Activated naive CD4-positive, alpha-beta T cell treated with anti-CD3 and anti-CD28 coated beads for 36 hours (primary cell): ENCODE measurements at regions of chr7 and their contacts with region 1.

Region 1: DNA sequence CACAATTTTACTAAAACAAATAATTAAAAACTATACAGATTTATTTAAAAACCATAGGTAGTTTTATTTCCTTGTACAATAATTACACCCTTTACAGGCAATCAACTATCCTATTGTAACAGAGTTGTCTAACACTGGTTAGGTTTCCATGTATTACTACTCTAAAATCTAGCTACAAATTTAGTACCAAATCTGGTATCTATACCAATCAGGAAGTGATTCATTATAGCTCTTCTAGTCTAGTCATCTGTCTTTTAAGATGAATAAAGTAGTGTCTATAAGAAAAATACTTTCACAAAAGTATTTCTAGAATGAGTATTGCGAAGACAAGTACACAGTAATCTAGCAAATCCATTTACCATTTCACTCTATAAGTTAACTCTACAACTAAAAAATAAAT is 16.9 kb downstream of the ZNF800 start:
- DNase-seq: no peak
- H3K4me3 Mint-ChIP-seq: no peak overlapping the region
- H3K27ac Mint-ChIP-seq: no peak overlapping the region
- H3K4me1 Mint-ChIP-seq: peaks cover 53% of the 10 kb centered on the region
- H3K27me3 Mint-ChIP-seq: no peaks in the 10 kb centered on the region

Region 2: DNA sequence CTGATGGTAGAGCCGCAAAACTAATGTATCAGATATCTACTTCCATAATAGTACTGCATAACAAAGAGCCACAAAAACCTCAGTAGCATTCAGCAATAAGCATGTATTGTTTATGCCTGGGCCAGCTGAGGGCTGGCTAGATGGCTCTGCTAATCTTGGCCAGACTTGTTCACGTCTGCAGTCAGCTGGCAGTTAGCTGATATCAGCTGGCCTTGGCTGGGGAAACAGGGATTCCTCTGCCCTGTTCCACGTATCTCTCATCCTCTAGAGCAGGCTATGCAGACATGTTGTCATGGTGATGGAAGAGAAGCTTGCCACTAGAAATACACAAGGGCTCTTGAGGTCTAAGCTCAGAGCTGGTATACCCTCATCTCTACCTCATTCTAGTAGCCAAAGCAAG is 185.7 kb before region 1 on chr7:
- CTCF ChIA-PET with region 1: no interaction called
- intact Hi-C with region 1: no loop called
- DNase-seq: no peak
- H3K4me3 Mint-ChIP-seq: no peak overlapping the region
- H3K27ac Mint-ChIP-seq: no peak overlapping the region
- H3K4me1 Mint-ChIP-seq: peaks cover 8% of the 10 kb centered on the region
- H3K27me3 Mint-ChIP-seq: peaks cover 30% of the 10 kb centered on the region

Region 3: GRCh38 chr7:127745445-127745844 is 369.8 kb after region 1 on chr7:
- CTCF ChIA-PET with region 1: no interaction called
- intact Hi-C with region 1: loop called (anchors 10 kb)
- DNase-seq: peak; percentile 27
- H3K4me3 Mint-ChIP-seq: no peak overlapping the region
- H3K27ac Mint-ChIP-seq: peak overlapping the region; percentile 19
- H3K4me1 Mint-ChIP-seq: peaks cover 51% of the 10 kb centered on the region
- H3K27me3 Mint-ChIP-seq: no peaks in the 10 kb centered on the region